Calu3 (cell line): ENCODE measurements at regions of chr18 and their contacts with region 1.

Region 1: GRCh38 chr18:56831988-56832387 is 180.8 kb downstream of the WDR7 start:
- DNase-seq: no peak
- H3K4me3 Mint-ChIP-seq: no peak overlapping the region
- H3K27ac Mint-ChIP-seq: no peak overlapping the region
- H3K4me1 Mint-ChIP-seq: peaks cover 19% of the 10 kb centered on the region
- H3K27me3 Mint-ChIP-seq: no peaks in the 10 kb centered on the region
- CTCF ChIP-seq: no peak

Region 2: GRCh38 chr18:57595347-57595746 is 763.4 kb after region 1 on chr18:
- CTCF ChIA-PET with region 1: interaction called, 10 read pairs
- intact Hi-C with region 1: no loop called
- DNase-seq: no peak
- H3K4me3 Mint-ChIP-seq: no peak overlapping the region
- H3K27ac Mint-ChIP-seq: no peak overlapping the region
- H3K4me1 Mint-ChIP-seq: no peaks in the 10 kb centered on the region
- H3K27me3 Mint-ChIP-seq: no peaks in the 10 kb centered on the region
- CTCF ChIP-seq: no peak